ENCODE measurements at regions of chr20 and their contacts with region 1.

Region 1: GRCh38 chr20:36199345-36200257 is 36.7 kb upstream of the AAR2 start:
- DNase-seq: peak; percentile 53 to 79
- H3K4me3 ChIP-seq: no peak overlapping the region
- H3K27ac ChIP-seq: no peak overlapping the region
- H3K4me1 ChIP-seq: no peaks in the 10 kb centered on the region
- H3K27me3 ChIP-seq: no peaks in the 10 kb centered on the region
- CTCF ChIP-seq: peak; percentile 94

Region 2: GRCh38 chr20:35750611-35751010 is 449.0 kb before region 1 on chr20:
- CTCF ChIA-PET with region 1: no interaction called
- POLR2A ChIA-PET with region 1: no interaction called
- intact Hi-C with region 1: no loop called
- DNase-seq: no peak
- H3K4me3 ChIP-seq: no peak overlapping the region
- H3K27ac ChIP-seq: no peak overlapping the region
- H3K4me1 ChIP-seq: no peaks in the 10 kb centered on the region
- H3K27me3 ChIP-seq: no peaks in the 10 kb centered on the region
- CTCF ChIP-seq: no peak

Region 3: DNA sequence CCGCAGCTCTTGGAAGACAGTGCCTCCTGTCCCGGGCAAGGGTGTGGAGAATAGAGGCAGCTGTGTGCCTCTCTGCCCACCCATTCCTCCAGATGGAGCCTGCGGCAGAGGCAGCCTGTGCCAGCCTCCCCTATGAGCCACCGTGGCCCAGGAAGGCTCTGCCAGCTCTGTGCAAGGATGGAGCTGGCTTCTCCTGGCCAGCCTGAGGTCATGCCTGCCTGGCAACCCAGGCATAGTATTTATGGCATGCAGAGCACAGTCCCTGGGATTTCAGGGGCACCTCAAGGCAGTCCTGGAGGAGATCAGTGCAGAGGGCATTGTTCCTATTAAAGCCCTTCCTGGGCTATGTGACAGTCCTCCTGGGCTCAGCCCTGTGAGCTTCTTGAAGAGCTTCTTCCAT is 43.6 kb before region 1 on chr20:
- CTCF ChIA-PET with region 1: interaction called, 5 read pairs
- POLR2A ChIA-PET with region 1: no interaction called
- intact Hi-C with region 1: loop called (anchors 1 kb)
- DNase-seq: no peak
- H3K4me3 ChIP-seq: no peak overlapping the region
- H3K27ac ChIP-seq: no peak overlapping the region
- H3K4me1 ChIP-seq: peaks cover 35% of the 10 kb centered on the region
- H3K27me3 ChIP-seq: no peaks in the 10 kb centered on the region
- CTCF ChIP-seq: no peak

Region 4: DNA sequence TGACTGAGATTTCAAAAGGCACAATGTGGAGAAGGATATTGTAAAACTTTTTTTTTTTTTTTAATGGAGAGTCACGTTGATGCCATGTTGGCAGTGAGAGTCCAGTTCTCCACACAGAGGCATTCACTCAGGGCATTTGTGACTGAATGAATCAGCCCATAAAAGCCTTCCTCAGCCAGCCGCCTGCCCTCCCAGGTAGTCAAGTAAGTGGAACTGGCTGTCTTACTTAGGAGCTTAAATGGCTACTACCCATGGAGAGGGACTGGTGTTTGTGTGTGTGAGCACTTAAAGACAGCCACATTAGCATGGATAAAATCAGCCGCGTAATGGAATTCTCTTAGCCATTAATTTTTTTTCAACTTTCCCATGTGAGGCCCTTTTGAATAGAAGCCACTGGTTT is 49.2 kb after region 1 on chr20:
- CTCF ChIA-PET with region 1: interaction called, 17 read pairs
- POLR2A ChIA-PET with region 1: no interaction called
- intact Hi-C with region 1: no loop called
- DNase-seq: no peak
- H3K4me3 ChIP-seq: no peak overlapping the region
- H3K27ac ChIP-seq: no peak overlapping the region
- H3K4me1 ChIP-seq: no peaks in the 10 kb centered on the region
- H3K27me3 ChIP-seq: no peaks in the 10 kb centered on the region
- CTCF ChIP-seq: no peak

Region 5: GRCh38 chr20:36399147-36399968 is 199.8 kb after region 1 on chr20:
- CTCF ChIA-PET with region 1: interaction called, 10 read pairs
- POLR2A ChIA-PET with region 1: no interaction called
- intact Hi-C with region 1: no loop called
- DNase-seq: peak; percentile 56 to 62
- H3K4me3 ChIP-seq: no peak overlapping the region
- H3K27ac ChIP-seq: no peak overlapping the region
- H3K4me1 ChIP-seq: no peaks in the 10 kb centered on the region
- H3K27me3 ChIP-seq: peaks cover 35% of the 10 kb centered on the region
- CTCF ChIP-seq: peak; percentile 65

Region 6: GRCh38 chr20:36460648-36461599 is 261.3 kb after region 1 on chr20:
- CTCF ChIA-PET with region 1: interaction called, 10 read pairs
- POLR2A ChIA-PET with region 1: no interaction called
- intact Hi-C with region 1: no loop called
- DNase-seq: peak; percentile 76 to 86
- H3K4me3 ChIP-seq: peak overlapping the region; percentile 43
- H3K27ac ChIP-seq: peak overlapping the region; percentile 27; the same call in 1 of the 2 replicates
- H3K4me1 ChIP-seq: peaks cover 39% of the 10 kb centered on the region
- H3K27me3 ChIP-seq: no peaks in the 10 kb centered on the region
- CTCF ChIP-seq: no peak